ENCODE measurements at regions of chr10 and their contacts with region 1.

Region 1: DNA sequence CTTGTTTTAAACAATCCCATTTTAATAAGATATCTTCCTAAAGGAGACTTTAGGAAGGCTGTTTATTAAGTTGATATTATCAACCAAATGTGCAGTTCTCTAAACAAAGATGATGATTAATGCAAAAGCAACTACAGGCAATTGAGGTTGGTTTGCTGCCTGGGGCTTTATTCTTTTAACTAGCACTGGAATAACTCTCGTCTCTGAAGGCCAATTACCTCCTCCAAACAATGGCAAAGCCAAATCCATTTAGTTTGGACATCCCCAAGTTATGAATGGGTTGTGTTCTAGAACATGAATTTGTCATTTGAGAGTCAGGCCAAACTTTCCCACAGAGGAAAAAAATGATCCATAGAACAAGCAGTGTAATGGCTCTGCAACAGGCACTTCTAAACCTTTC is 114.1 kb downstream of the SLC16A9 start:
- DNase-seq: no peak
- H3K4me3 Mint-ChIP-seq: no peak overlapping the region
- H3K27ac Mint-ChIP-seq: no peak overlapping the region
- H3K4me1 Mint-ChIP-seq: no peaks in the 10 kb centered on the region
- H3K27me3 Mint-ChIP-seq: peaks cover 5% of the 10 kb centered on the region

Region 2: GRCh38 chr10:58980826-58981415 is 614.7 kb before region 1 on chr10:
- CTCF ChIA-PET with region 1: no interaction called
- POLR2A ChIA-PET with region 1: interaction called, 11 read pairs
- DNase-seq: no peak
- H3K4me3 Mint-ChIP-seq: no peak overlapping the region
- H3K27ac Mint-ChIP-seq: no peak overlapping the region
- H3K4me1 Mint-ChIP-seq: no peaks in the 10 kb centered on the region
- H3K27me3 Mint-ChIP-seq: no peaks in the 10 kb centered on the region